Activated CD4-positive, alpha-beta memory T cell treated with anti-CD3 and anti-CD28 coated beads for 36 hours (primary cell): ENCODE measurements at regions of chr20 and their contacts with region 1.

Region 1: GRCh38 chr20:4082406-4083097 is 67.2 kb upstream of the RNF24 start:
- DNase-seq: peak; percentile 67
- H3K4me3 Mint-ChIP-seq: peak overlapping the region; percentile 42
- H3K27ac Mint-ChIP-seq: peak overlapping the region; percentile 89
- H3K4me1 Mint-ChIP-seq: peaks cover 45% of the 10 kb centered on the region
- H3K27me3 Mint-ChIP-seq: no peaks in the 10 kb centered on the region

Region 2: DNA sequence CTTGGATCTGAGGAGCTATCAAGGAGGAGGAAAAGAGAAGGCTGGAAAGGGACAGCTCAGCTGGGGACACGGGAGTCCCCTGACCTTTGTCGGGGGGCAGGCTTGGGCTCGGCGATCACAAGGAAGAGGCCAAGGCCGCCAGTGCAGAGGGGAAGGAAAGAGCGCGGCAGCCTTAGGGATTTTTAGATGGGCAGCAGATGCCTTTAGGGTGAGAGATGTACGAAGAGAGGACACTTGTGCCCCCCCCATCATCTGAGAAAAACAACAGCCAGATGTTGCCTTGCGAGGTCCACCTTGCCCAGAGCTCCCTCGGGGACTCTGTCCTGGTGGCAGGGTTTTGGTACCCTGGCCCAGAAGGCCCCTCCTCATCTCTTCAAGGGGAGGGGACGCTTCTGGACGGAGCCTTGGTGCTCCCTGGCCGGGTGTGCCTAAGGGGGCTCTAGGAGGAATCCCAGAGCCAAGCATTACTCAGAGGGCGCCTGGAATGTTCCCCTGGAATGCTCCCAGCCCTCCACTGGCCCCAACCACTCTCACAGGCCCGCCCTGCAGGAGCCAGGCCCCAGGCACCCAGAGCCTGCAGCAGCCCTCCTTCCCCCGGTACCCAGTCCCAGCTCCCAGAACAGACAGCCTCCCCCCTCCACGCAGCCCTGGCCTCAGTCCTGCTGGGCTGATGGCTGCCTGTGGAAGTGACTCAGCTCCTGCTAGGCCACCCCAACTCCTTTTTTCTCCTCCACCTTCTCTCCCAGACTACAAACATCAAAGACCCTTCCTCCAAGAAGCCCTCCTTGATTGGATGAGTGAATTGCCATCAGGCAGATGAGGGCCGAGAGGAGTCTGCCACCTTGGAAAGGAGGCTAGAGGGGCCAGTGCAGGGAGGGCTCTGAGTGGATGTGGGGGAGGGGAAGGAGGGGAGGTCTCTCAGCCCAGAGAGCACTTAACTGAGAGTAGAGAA is 402.5 kb before region 1 on chr20:
- CTCF ChIA-PET with region 1: interaction called, 22 read pairs
- POLR2A ChIA-PET with region 1: no interaction called
- intact Hi-C with region 1: loop called (anchors 5 kb)
- DNase-seq: no peak
- H3K4me3 Mint-ChIP-seq: no peak overlapping the region
- H3K27ac Mint-ChIP-seq: no peak overlapping the region
- H3K4me1 Mint-ChIP-seq: no peaks in the 10 kb centered on the region
- H3K27me3 Mint-ChIP-seq: peaks cover 38% of the 10 kb centered on the region

Region 3: DNA sequence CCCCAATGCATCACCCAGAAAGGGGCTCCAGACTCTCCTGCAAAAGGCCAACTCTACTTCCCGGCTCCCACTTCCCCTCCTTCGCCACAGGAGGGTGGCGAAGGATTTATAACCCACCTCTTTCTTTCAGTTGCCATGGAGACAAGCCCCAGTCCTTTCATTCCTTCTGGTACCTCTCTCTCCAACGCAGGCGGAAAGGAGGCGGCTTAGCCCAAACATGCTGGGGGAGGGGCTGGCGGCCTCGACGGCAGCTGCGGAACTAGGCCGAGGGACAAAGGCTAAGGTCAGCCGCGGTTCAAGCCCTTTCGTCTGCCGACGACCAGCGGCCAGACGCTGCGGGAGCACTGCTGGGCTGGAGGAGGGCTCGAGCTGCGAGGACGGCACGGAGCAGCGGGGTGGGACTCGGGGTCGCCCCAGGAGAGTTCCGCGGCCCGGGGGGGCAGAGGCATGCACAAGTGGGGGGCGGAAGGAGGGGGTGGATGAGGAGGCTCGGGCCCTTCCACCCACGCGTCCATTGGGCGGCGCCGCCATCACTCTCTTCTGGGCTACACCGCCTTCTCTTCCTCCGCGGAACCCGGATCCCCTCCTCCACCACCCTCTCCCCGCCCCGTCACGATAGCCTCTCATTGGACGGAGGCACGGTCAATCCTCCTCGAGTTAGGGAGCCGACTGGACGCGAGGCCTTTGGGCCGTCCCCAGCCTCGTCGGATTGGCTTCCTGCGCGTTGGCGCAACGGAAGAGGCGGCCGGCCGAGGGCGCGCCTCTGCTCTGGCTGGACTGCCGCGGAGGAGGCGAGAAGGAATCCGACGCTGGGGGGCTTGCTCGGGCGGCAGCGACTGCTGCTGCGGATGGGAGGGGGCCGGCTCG is 193.7 kb before region 1 on chr20 and contains the start of gene PANK2:
- CTCF ChIA-PET with region 1: interaction called, 10 read pairs
- POLR2A ChIA-PET with region 1: no interaction called
- intact Hi-C with region 1: loop called (anchors 5 kb)
- DNase-seq: peak; percentile 99
- H3K4me3 Mint-ChIP-seq: peak within 1 kb of the TSS; percentile 92
- H3K27ac Mint-ChIP-seq: peak within 1 kb of the TSS; percentile 97
- H3K4me1 Mint-ChIP-seq: peaks cover 40% of the 10 kb centered on the region
- H3K27me3 Mint-ChIP-seq: no peaks in the 10 kb centered on the region
- total RNA-seq, gene PANK2: 49.3 to 52.5 TPM

Region 4: DNA sequence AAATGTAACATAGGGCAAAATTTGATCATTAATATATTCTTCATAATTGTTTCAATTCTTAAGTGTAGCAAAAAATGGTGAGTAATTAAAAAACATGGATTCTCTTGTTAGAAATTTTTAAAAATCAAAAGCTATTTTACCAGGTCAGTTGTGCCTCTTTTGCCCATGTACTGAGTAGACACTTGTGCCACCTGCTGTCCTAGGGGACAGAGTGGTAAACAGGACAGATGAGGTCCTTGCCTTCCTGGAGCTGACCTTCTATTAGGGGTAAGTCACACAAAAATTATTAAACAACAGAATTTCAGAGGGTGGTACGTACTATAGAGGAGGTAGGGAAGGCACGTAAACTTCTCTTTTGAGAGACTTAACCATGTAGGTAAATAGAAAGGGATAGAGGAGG is 73.7 kb before region 1 on chr20:
- CTCF ChIA-PET with region 1: interaction called, 18 read pairs
- POLR2A ChIA-PET with region 1: no interaction called
- intact Hi-C with region 1: loop called (anchors 1 kb)
- DNase-seq: no peak
- H3K4me3 Mint-ChIP-seq: no peak overlapping the region
- H3K27ac Mint-ChIP-seq: no peak overlapping the region
- H3K4me1 Mint-ChIP-seq: peaks cover 33% of the 10 kb centered on the region
- H3K27me3 Mint-ChIP-seq: no peaks in the 10 kb centered on the region

Region 5: DNA sequence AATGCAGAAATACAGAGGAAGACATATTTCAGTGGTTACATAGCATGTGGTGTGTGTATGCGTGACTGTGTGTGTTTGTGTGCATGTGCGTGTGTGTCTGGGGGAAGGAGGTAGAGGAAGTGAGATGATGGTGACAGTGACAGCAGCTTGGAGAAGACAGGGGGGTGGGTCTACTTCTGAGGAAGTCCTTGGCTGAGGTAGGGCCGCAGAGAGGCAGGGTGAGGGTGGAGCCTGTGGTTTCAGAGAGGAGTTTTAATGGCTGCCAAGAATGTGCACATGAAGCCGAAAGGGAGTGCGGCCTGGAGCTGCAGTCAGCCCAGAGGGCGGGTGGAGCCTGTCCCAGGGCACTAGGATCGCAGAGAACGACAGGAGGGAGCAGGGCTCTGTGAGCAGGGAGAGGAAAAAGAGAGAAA is 44.5 kb before region 1 on chr20:
- CTCF ChIA-PET with region 1: interaction called, 9 read pairs
- POLR2A ChIA-PET with region 1: no interaction called
- intact Hi-C with region 1: loop called (anchors 1 kb)
- DNase-seq: peak; percentile 89
- H3K4me3 Mint-ChIP-seq: peak overlapping the region; percentile 70
- H3K27ac Mint-ChIP-seq: peak overlapping the region; percentile 89
- H3K4me1 Mint-ChIP-seq: peaks cover 18% of the 10 kb centered on the region
- H3K27me3 Mint-ChIP-seq: no peaks in the 10 kb centered on the region

Region 6: DNA sequence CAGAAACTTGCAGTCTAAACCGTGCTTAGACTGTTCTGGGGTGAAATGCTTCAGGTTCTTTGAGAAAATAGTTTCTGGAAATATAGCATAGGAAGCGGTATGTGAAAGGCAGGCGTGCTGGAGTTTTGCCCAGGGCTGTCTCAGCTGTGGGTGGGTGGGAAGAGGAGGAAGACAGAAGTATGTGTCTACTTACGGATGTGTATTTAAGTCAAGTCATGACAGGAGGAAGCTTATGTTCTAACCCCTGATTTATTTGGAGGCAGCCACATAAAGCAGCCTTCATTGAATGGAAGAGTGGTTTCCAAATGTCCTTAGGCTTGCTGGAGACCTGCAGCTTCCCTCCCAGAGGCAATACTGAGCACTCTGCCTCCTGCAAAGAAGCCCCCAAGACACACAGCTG is 293.3 kb after region 1 on chr20:
- CTCF ChIA-PET with region 1: no interaction called
- POLR2A ChIA-PET with region 1: no interaction called
- intact Hi-C with region 1: no loop called
- DNase-seq: no peak
- H3K4me3 Mint-ChIP-seq: no peak overlapping the region
- H3K27ac Mint-ChIP-seq: no peak overlapping the region
- H3K4me1 Mint-ChIP-seq: peaks cover 9% of the 10 kb centered on the region
- H3K27me3 Mint-ChIP-seq: peaks cover 20% of the 10 kb centered on the region